B cell (primary cell): ENCODE measurements at regions of chr2 and their contacts with region 1.

Region 1: DNA sequence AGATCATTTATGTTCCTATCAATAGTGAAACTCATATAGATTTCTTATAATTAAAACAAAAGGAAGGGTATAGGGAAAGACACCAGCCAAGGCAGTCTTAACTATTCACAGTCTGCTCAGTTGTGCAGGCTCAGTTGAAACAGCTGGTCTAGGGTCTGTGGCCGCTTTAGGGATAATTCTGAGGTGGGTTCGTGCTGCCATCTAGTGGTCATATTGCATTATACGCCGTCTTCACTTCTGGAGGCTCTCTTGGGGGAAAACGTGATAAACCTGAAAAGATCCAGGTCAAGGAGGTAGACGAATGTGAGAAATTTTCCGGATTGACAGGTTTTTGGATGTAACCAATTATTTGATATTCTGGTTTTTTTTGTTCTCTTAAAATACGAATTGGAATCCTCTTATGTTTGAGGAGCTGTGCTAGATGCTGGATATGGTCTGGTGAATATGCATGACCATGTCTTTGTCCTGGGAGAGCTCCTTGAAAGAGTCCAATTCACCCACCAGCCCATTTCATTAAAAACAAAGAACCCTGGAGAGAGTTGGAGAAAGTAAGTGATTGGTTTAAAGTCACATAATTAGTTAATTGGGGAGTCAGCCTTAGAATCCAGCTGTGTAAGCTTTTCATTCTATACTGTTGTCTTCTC is 492.4 kb downstream of the PLCL1 start:
- DNase-seq: peak; percentile 60
- ATAC-seq: peak; percentile 69
- H3K4me3 ChIP-seq: no peak overlapping the region
- H3K4me3 Mint-ChIP-seq: no peak overlapping the region
- H3K27ac ChIP-seq: no peak overlapping the region
- H3K27ac Mint-ChIP-seq: no peak overlapping the region
- H3K4me1 ChIP-seq: no peaks in the 10 kb centered on the region
- H3K4me1 Mint-ChIP-seq: peaks cover 4% of the 10 kb centered on the region
- H3K27me3 ChIP-seq: peaks cover 0 to 7% (median 0%) of the 10 kb centered on the region in 4 experiments
- H3K27me3 Mint-ChIP-seq: peaks cover 11% of the 10 kb centered on the region
- CTCF ChIP-seq: peak; percentile 93

Region 2: GRCh38 chr2:197873293-197873701 is 423.5 kb before region 1 on chr2:
- CTCF ChIA-PET with region 1: no interaction called
- POLR2A ChIA-PET with region 1: no interaction called
- intact Hi-C with region 1: no loop called
- DNase-seq: no peak
- ATAC-seq: no peak
- H3K4me3 ChIP-seq: no peak overlapping the region
- H3K4me3 Mint-ChIP-seq: no peak overlapping the region
- H3K27ac ChIP-seq: no peak overlapping the region
- H3K27ac Mint-ChIP-seq: no peak overlapping the region
- H3K4me1 ChIP-seq: no peaks in the 10 kb centered on the region
- H3K4me1 Mint-ChIP-seq: no peaks in the 10 kb centered on the region
- H3K27me3 ChIP-seq: no peaks in the 10 kb centered on the region
- H3K27me3 Mint-ChIP-seq: peaks cover 11% of the 10 kb centered on the region
- CTCF ChIP-seq: no peak

Region 3: GRCh38 chr2:198279026-198279425 is 17.8 kb before region 1 on chr2:
- CTCF ChIA-PET with region 1: interaction called, 14 read pairs
- POLR2A ChIA-PET with region 1: no interaction called
- intact Hi-C with region 1: no loop called
- DNase-seq: no peak
- ATAC-seq: no peak
- H3K4me3 ChIP-seq: no peak overlapping the region
- H3K4me3 Mint-ChIP-seq: no peak overlapping the region
- H3K27ac ChIP-seq: no peak overlapping the region
- H3K27ac Mint-ChIP-seq: no peak overlapping the region
- H3K4me1 ChIP-seq: no peaks in the 10 kb centered on the region
- H3K4me1 Mint-ChIP-seq: no peaks in the 10 kb centered on the region
- H3K27me3 ChIP-seq: peaks cover 0 to 2% (median 0%) of the 10 kb centered on the region in 4 experiments
- H3K27me3 Mint-ChIP-seq: peaks cover 12% of the 10 kb centered on the region
- CTCF ChIP-seq: no peak

Region 4: GRCh38 chr2:198337368-198337767 is 40.6 kb after region 1 on chr2:
- CTCF ChIA-PET with region 1: interaction called, 12 read pairs
- POLR2A ChIA-PET with region 1: no interaction called
- intact Hi-C with region 1: no loop called
- DNase-seq: no peak
- ATAC-seq: no peak
- H3K4me3 ChIP-seq: no peak overlapping the region
- H3K4me3 Mint-ChIP-seq: no peak overlapping the region
- H3K27ac ChIP-seq: no peak overlapping the region
- H3K27ac Mint-ChIP-seq: no peak overlapping the region
- H3K4me1 ChIP-seq: no peaks in the 10 kb centered on the region
- H3K4me1 Mint-ChIP-seq: no peaks in the 10 kb centered on the region
- H3K27me3 ChIP-seq: no peaks in the 10 kb centered on the region
- H3K27me3 Mint-ChIP-seq: peaks cover 13% of the 10 kb centered on the region
- CTCF ChIP-seq: no peak